ENCODE measurements at regions of chr2 and their contacts with region 1.

Region 1: DNA sequence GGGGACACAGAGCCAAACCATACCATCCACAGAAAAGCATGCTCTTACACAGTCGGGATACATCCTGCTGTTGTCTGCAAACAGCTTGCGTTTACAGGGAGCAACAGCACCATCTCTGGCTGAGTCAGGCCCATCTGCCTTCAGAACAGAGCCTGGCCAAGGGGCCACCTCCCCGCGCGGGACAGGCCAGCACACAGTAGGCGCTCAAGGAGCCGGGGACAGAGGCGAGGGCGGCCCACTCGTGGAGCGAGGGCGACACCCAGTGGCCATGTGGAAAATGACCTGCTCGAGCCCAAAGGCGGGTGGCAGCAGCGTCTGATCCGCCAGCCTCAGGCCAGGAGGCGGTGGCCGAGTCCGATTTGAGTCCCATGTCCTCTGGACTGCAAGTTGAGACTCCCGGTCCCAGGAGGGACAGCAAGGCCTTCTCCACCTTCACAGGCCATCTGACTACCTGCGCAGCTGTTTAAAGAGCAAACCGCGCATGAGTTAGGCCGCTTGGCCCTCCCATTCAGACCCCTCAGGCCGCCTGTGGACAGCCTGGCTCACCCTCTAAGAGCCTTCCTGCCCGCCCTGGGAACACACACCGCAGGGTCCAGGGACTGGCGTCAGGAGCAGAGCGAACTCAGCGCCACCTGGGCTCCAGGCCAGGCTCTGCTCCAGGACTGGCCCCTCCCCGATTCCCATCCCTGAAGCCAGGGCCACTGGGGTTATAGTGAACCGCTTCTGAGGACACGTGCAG is 38.3 kb downstream of the TTC32 start:
- ATAC-seq: peak; percentile 89 to 96 (median 94)
- H3K4me3 ChIP-seq: no peak overlapping the region
- H3K27ac ChIP-seq: no peak overlapping the region
- H3K4me1 ChIP-seq: peaks cover under 1 to 1% of the 10 kb centered on the region in 2 donors

Region 2: DNA sequence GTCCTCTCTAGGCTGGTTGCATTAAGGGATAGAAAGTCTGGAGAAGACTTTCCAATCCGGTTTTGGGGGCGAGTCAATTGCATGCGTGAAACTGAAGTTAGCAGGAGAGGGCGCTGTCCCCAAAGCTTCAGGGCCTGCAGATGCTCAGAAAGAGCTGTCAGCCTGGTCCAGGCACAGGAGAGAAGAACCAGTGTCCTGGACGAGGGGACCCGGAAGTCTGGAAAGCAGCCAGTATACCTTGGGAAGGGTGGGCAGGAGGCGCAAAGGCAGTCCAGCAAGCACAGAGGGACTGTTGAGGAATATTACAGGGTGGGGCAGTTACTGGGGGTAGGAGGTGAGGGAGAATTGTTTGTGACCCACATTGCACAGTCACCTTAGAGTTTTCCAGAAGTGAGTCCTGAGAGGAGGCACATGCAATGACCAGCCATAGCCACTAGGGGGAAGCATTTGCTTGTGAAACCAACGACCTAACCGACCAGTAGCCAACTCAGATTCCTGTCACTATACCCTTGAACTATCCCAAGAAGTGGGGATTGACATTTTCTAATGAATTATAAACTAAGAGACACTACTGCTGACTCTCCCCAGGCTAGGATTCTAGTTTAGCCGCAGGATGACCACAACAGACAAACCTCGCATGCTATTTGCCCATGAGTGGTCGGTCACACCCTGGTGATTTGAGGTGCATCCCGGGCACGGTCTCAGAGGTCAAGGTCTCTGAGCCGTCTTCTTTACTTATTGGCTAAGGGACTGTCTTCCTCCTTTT is 1475.8 kb before region 1 on chr2:
- in situ Hi-C with region 1: loop called in 2 of 9 experiments (anchors 25 kb)
- ATAC-seq: peak; percentile 77 to 98 (median 91)
- H3K4me3 ChIP-seq: no peak overlapping the region
- H3K27ac ChIP-seq: no peak overlapping the region
- H3K4me1 ChIP-seq: peaks cover 0 to 4% of the 10 kb centered on the region in 2 donors

Region 3: DNA sequence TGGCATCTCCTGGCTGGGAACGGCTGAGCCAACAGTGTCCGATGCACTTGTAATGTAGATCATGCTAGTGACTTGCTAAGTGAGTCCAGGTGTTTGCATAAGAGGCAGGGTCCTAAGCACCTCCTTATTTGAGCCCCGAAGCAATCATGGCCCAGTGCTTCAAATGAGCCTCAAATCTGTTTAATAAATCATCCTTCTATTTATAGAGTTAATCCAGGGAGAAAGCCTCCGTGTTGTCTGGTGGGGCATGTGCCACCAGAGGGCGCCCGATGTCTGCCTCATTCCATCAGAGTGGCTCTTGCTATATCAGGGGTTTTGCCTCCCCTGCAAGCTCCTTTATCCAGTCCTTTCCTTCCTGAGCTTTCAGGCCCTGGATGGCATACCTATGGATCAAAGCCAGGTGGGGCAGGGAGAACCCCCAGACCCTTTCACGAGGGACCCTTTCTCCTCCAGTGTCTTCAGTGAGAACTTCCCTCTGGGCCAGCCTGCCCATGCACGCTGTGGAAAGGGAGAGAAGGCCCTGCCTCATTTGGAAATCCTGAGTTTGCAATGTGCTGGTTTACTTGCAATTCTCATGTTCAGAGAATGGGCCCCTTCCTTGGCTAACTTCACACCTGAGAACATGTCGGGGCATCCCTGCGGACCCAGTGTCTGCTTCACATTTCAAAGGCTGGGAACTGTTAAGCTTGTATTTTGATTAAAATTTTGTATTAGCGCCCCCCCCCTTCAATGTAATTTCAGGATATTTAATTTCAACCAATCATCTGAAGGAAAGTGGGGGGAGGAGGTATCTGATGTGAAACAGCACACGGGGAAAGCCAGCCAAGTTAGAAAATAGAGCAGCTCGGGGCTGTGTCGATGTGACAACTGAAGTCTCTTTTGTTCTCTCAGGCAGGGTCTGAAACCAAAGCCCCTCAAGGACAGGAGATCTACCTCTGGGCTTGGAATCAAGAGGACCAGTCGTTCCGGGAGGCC is 1342.7 kb before region 1 on chr2:
- in situ Hi-C with region 1: loop called in 1 of 9 experiments (anchors 25 kb)
- ATAC-seq: peak; percentile 78 to 98 (median 96)
- H3K4me3 ChIP-seq: no peak overlapping the region
- H3K27ac ChIP-seq: no peak overlapping the region
- H3K4me1 ChIP-seq: no peaks in the 10 kb centered on the region

Region 4: GRCh38 chr2:19362755-19363473 is 500.6 kb before region 1 on chr2:
- in situ Hi-C with region 1: loop called in 3 of 9 experiments (anchors 10 to 25 kb)
- ATAC-seq: peak; percentile 46 to 66 (median 63)
- H3K4me3 ChIP-seq: peak overlapping the region in 4 of 5 donors; percentile 8 to 24 (median 18)
- H3K27ac ChIP-seq: no peak overlapping the region
- H3K4me1 ChIP-seq: peaks cover 9 to 10% of the 10 kb centered on the region in 2 donors

Region 5: GRCh38 chr2:19675856-19676460 is 187.5 kb before region 1 on chr2:
- in situ Hi-C with region 1: loop called in 1 of 9 experiments (anchors 25 kb)
- ATAC-seq: peak in 3 of 8 experiments; percentile 78 to 97 (median 93)
- H3K4me3 ChIP-seq: no peak overlapping the region
- H3K27ac ChIP-seq: no peak overlapping the region
- H3K4me1 ChIP-seq: no peaks in the 10 kb centered on the region

Region 6: DNA sequence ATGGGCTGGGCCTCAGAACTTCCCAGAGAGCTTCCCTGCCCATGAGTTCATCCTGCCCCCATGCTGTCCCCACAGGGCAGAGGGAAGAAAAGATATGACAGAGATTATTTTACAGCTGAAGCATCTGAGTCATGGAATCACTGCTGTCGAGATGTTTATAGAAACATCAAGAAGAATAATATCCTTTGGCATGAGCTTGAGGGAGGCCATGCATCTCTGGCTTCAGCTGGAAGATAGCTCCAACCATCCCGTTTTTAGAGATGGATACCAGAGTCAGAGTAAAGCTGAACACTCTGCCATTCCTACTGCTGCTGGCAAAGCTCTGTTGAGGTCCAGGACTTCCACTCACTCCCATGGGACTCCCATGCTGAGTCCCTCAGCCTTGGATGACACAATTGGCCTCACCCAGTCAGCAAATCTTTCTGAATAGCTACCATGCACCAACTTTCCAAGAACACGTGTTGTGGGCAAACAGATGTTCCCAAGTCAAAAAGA is 129.5 kb before region 1 on chr2:
- in situ Hi-C with region 1: no loop called
- ATAC-seq: peak in 3 of 8 experiments; percentile 21 to 58 (median 30)
- H3K4me3 ChIP-seq: no peak overlapping the region
- H3K27ac ChIP-seq: no peak overlapping the region
- H3K4me1 ChIP-seq: peaks cover 0 to 2% of the 10 kb centered on the region in 2 donors